Breast epithelium (tissue), 4 donors: ENCODE measurements at regions of chr3 and their contacts with region 1.

Region 1: GRCh38 chr3:105791919-105792786 is 76.7 kb downstream of the CBLB start:
- DNase-seq: peak in 1 of 2 donors; percentile 53
- H3K4me3 ChIP-seq: no peak overlapping the region
- H3K27ac ChIP-seq: peak overlapping the region; percentile 79 to 83
- H3K4me1 ChIP-seq: no peaks in the 10 kb centered on the region
- H3K27me3 ChIP-seq: no peaks in the 10 kb centered on the region
- CTCF ChIP-seq: no peak
- POLR2A ChIP-seq: no peak

Region 2: GRCh38 chr3:107008213-107008612 is 1216.1 kb after region 1 on chr3:
- intact Hi-C with region 1: loop called (anchors 5 kb)
- DNase-seq: no peak
- H3K4me3 ChIP-seq: no peak overlapping the region
- H3K27ac ChIP-seq: no peak overlapping the region
- H3K4me1 ChIP-seq: no peaks in the 10 kb centered on the region
- H3K27me3 ChIP-seq: no peaks in the 10 kb centered on the region
- CTCF ChIP-seq: no peak
- POLR2A ChIP-seq: no peak